PC-9 (cell line): ENCODE measurements at regions of chr4 and their contacts with region 1.

Region 1: GRCh38 chr4:147160908-147161513 is 215.3 kb upstream of the TTC29 start:
- DNase-seq: peak in 1 of 2 experiments; percentile 13
- H3K4me3 ChIP-seq: no peak overlapping the region
- H3K27ac ChIP-seq: no peak overlapping the region
- H3K4me1 ChIP-seq: no peaks in the 10 kb centered on the region
- H3K27me3 ChIP-seq: no peaks in the 10 kb centered on the region
- CTCF ChIP-seq: peak; percentile 75

Region 2: GRCh38 chr4:147518846-147519767 is 358.1 kb after region 1 on chr4:
- CTCF ChIA-PET with region 1: no interaction called
- POLR2A ChIA-PET with region 1: no interaction called
- intact Hi-C with region 1: loop called (anchors 2 kb)
- DNase-seq: peak; percentile 44 to 45
- H3K4me3 ChIP-seq: no peak overlapping the region
- H3K27ac ChIP-seq: no peak overlapping the region
- H3K4me1 ChIP-seq: no peaks in the 10 kb centered on the region
- H3K27me3 ChIP-seq: no peaks in the 10 kb centered on the region
- CTCF ChIP-seq: peak; percentile 83

Region 3: DNA sequence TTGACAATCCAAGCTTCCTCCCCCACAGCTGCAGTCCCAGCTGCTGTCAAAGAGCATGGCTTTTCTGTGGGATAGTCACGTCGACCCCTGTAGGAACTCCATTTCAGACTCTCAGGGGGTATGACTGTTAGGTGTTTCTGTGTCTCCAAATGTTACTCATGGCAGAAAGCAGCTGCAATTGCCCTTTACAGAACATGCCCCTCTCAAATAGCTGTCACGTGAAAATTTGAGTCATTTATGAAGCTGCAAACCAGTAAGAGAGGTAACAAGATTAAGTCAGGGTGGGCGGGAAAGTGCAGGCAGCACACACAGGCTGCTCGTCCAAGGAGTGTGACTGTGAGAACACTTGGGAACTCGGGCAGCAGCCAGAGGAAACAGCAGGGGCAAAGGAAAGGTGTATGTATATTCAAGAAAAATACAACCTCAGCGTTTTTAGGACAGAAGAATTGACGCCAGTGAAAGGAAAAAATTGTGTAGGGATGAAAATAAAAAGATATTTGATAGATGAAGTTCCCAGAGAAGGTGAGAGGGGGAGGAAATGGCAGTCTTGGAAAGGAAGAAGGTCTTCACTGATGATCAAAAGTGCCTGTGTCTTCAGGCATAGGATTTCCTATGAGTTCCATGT is 389.7 kb after region 1 on chr4:
- CTCF ChIA-PET with region 1: no interaction called
- POLR2A ChIA-PET with region 1: interaction called, 15 read pairs
- intact Hi-C with region 1: no loop called
- DNase-seq: no peak
- H3K4me3 ChIP-seq: no peak overlapping the region
- H3K27ac ChIP-seq: no peak overlapping the region
- H3K4me1 ChIP-seq: no peaks in the 10 kb centered on the region
- H3K27me3 ChIP-seq: no peaks in the 10 kb centered on the region
- CTCF ChIP-seq: no peak

Region 4: DNA sequence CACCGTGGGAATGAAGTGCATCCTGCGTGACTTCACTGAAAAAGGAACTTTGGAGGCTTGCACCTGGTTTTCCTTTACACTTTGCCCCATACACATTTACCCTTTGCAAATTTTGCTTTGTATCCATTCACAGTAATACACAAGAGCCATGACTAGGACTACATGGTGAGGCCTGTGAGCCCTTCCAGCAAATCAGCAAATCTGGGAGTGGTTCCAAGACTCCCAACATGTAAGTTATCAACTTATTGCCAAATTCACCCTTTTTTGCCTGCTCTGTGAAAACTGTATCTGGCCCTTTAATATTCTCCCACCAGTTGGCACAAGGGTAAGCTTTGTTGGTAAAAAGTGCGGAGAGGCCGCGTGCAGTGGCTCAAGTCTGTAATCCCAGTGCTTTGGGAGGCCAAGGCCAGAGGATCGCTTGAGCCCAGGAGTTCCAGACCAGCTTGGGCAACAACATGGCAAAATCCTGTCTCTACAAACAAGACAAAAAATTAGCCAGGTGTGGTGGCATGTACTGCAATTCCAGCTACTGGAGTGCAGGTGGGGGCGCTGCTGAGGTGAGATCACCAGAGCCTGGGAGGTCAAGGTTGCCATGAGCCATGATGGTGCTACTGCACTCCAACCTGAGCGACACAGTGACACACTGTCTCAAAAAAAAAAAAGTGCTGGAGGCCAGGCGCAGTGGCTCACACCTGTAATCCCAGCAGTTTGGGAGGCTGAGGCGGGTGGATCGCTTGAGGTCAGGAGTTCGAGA is 518.0 kb after region 1 on chr4:
- CTCF ChIA-PET with region 1: interaction called, 14 read pairs
- POLR2A ChIA-PET with region 1: no interaction called
- intact Hi-C with region 1: no loop called
- DNase-seq: no peak
- H3K4me3 ChIP-seq: no peak overlapping the region
- H3K27ac ChIP-seq: no peak overlapping the region
- H3K4me1 ChIP-seq: peaks cover 8% of the 10 kb centered on the region; the same call in 1 of the 2 replicates
- H3K27me3 ChIP-seq: no peaks in the 10 kb centered on the region
- CTCF ChIP-seq: no peak; the same call in 1 of the 2 replicates